Posterior vena cava (tissue), 2 donors: ENCODE measurements at regions of chr17 and their contacts with region 1.

Region 1: DNA sequence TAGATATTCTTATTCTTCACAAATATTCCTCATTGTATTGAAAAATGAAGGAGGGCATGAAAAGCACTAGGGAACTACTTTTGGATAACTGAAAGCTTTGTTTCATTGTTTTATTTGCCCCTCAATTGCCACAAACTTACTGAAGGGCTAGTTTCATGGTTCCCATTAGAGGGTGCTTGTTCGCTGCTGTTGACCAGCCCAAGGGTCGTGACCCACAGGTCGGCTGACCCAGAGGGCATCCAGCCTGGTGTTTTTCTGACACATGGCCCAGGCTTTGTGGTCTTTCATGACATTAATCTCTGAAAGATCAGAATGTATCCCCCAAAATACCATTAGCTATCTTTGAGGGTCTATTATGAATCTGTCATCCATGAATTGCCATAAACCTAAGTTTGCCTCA is 30.0 kb downstream of the DGKE start:
- DNase-seq: no peak

Region 2: DNA sequence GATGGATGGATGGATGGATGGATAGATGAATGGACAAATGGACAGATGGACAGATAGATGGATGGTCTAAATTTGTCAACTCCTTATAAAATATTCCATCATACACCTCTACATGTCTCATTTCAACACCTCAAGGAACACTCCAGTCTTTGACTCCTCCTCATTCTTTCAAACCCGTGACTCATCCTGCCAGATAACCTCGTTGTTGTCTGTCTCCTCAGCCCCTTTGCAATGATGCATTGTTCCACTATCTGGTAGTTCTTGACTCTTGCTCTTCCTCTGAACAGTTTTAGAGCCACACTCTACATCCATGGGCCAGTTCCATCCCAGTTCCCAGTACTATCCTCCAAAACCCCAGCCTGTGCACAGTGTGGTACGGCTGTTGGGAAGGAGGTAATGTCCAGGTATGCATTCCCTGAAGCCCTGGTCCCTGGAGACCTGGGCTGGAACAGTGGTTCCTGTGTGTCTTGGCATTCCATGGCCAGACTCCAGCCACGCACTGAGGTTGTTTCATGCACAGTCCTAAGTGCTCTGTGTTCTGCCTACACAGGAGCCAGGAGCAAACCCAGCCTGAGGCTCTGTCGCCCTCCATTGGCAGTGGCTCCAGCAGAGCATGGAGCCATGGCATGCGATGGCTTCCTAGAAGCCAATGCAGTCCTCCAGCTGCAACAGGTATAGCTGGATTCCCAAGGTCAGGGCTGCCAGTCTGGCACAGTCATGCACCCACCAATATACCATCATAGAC is 135.9 kb before region 1 on chr17:
- intact Hi-C with region 1: no loop called
- DNase-seq: no peak

Region 3: GRCh38 chr17:56845934-56846333 is 18.0 kb before region 1 on chr17:
- intact Hi-C with region 1: loop called in 1 of 2 experiments (anchors 1 kb)
- DNase-seq: no peak